ENCODE measurements at regions of chr3 and their contacts with region 1.

Region 1: DNA sequence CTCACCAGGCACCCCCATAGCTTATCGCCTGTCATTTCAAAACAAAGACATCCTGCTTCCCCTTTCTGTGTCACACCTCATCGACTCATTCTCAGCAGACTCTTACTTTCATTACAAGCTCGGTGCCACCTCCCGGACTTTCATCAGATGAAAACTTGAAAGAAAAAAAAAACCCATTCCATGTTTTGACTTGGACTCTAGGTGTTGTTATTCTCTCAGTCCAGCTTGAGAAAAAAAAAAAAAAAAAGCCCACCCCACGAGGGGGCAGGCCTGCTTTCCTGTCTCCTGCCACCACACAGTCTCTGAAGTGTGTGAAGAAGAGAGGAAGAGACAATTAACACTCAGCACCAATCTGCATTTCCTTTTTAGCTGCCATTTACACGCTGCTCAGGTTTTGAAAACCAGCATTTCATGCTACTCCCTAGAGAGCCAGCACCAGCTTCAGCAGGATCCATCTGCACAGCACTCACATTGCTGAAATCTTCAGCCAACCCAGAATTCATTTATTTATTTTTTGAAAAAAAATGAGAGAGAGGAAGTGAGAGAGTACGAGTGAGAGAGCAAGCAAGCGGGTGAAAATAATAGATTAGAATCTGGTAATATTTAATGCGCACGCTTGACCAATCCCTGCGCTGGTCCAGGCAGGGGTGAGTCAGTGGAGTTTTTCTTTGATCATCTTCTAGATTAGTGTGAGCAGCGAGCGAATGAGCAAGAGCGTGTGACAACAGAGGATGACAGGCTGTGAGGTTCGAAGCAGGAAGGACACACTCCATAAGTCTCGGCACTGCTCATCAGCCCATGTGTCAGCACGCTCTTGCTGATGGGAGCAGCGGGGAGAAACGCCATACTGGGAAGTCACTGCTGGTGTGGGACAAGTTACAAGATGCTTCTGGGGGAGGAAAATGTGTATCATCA is 23.5 kb downstream of the ZNF80 start:
- DNase-seq: peak; percentile 86
- ATAC-seq: peak; percentile 76
- H3K4me3 Mint-ChIP-seq: no peak overlapping the region
- H3K27ac Mint-ChIP-seq: no peak overlapping the region
- H3K4me1 Mint-ChIP-seq: peaks cover 17% of the 10 kb centered on the region
- H3K27me3 Mint-ChIP-seq: no peaks in the 10 kb centered on the region

Region 2: GRCh38 chr3:113690482-113690881 is 523.4 kb before region 1 on chr3:
- CTCF ChIA-PET with region 1: no interaction called
- POLR2A ChIA-PET with region 1: no interaction called
- intact Hi-C with region 1: no loop called
- DNase-seq: no peak
- ATAC-seq: no peak
- H3K4me3 Mint-ChIP-seq: no peak overlapping the region
- H3K27ac Mint-ChIP-seq: no peak overlapping the region
- H3K4me1 Mint-ChIP-seq: peaks cover 26% of the 10 kb centered on the region
- H3K27me3 Mint-ChIP-seq: no peaks in the 10 kb centered on the region

Region 3: GRCh38 chr3:114056130-114057010 is 157.5 kb before region 1 on chr3 and contains the starts of genes CCDC191 and QTRT2:
- CTCF ChIA-PET with region 1: interaction called, 3 read pairs
- POLR2A ChIA-PET with region 1: no interaction called
- intact Hi-C with region 1: loop called (anchors 1 to 5 kb)
- DNase-seq: peak; percentile 99
- ATAC-seq: peak; percentile 97
- H3K4me3 Mint-ChIP-seq: peak within 1 kb of the TSS; percentile 91
- H3K27ac Mint-ChIP-seq: peak within 1 kb of the TSS; percentile 95
- H3K4me1 Mint-ChIP-seq: peaks cover 43% of the 10 kb centered on the region
- H3K27me3 Mint-ChIP-seq: no peaks in the 10 kb centered on the region
- total RNA-seq, gene CCDC191: 2.2 to 2.4 TPM
- total RNA-seq, gene QTRT2: 31.3 to 47.0 TPM

Region 4: DNA sequence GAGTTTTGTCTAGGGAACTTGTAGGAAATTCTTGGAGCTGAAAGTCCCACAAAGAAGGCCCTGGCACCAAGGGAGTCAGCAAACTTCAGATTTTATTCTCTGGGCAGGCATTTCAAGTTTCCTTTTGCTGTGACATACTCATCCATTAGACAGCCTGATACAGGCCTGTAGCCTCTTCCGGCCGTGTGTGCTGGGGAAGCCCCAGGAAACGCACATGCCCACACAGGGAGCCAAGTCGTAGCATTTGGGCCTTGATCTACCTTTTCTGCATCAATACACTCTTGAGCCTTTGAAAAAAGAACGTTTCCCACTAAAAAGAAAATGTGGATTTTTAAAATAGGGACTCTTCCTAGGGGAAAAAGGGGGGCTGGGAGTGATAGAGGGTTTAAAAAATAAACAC is 94.9 kb after region 1 on chr3:
- CTCF ChIA-PET with region 1: interaction called, 6 read pairs
- POLR2A ChIA-PET with region 1: interaction called, 9 read pairs
- intact Hi-C with region 1: loop called (anchors 2 to 5 kb)
- DNase-seq: peak; percentile 69
- ATAC-seq: peak; percentile 75
- H3K4me3 Mint-ChIP-seq: peak overlapping the region; percentile 40
- H3K27ac Mint-ChIP-seq: peak overlapping the region; percentile 95
- H3K4me1 Mint-ChIP-seq: peaks cover 56% of the 10 kb centered on the region
- H3K27me3 Mint-ChIP-seq: no peaks in the 10 kb centered on the region

Region 5: GRCh38 chr3:114336122-114336697 is 122.3 kb after region 1 on chr3:
- CTCF ChIA-PET with region 1: interaction called, 3 read pairs
- POLR2A ChIA-PET with region 1: no interaction called
- intact Hi-C with region 1: loop called in 1 of 2 experiments (anchors 2 kb)
- DNase-seq: no peak
- ATAC-seq: no peak
- H3K4me3 Mint-ChIP-seq: no peak overlapping the region
- H3K27ac Mint-ChIP-seq: peak overlapping the region; percentile 76
- H3K4me1 Mint-ChIP-seq: peaks cover 59% of the 10 kb centered on the region
- H3K27me3 Mint-ChIP-seq: no peaks in the 10 kb centered on the region

Region 6: GRCh38 chr3:115658337-115659181 is 1444.7 kb after region 1 on chr3:
- CTCF ChIA-PET with region 1: no interaction called
- POLR2A ChIA-PET with region 1: no interaction called
- intact Hi-C with region 1: loop called in 1 of 2 experiments (anchors 5 kb)
- DNase-seq: peak; percentile 88
- ATAC-seq: peak; percentile 90
- H3K4me3 Mint-ChIP-seq: peak overlapping the region; percentile 66
- H3K27ac Mint-ChIP-seq: peak overlapping the region; percentile 95
- H3K4me1 Mint-ChIP-seq: peaks cover 51% of the 10 kb centered on the region
- H3K27me3 Mint-ChIP-seq: peaks cover 2% of the 10 kb centered on the region